ENCODE measurements at regions of chr14 and their contacts with region 1.

Region 1: GRCh38 chr14:90697577-90698206 is 118.5 kb downstream of the TTC7B start:
- DNase-seq: peak; percentile 84 to 88
- ATAC-seq: peak; percentile 56 to 61
- H3K4me3 ChIP-seq: peak overlapping the region in 1 of 4 donors; percentile 0
- H3K27ac ChIP-seq: peak overlapping the region; percentile 87 to 93 (median 88)
- H3K4me1 ChIP-seq: peaks cover 69 to 71% of the 10 kb centered on the region in 2 donors
- H3K27me3 ChIP-seq: no peaks in the 10 kb centered on the region
- CTCF ChIP-seq: peak; percentile 96 to 98 (median 96)
- POLR2A ChIP-seq: no peak

Region 2: DNA sequence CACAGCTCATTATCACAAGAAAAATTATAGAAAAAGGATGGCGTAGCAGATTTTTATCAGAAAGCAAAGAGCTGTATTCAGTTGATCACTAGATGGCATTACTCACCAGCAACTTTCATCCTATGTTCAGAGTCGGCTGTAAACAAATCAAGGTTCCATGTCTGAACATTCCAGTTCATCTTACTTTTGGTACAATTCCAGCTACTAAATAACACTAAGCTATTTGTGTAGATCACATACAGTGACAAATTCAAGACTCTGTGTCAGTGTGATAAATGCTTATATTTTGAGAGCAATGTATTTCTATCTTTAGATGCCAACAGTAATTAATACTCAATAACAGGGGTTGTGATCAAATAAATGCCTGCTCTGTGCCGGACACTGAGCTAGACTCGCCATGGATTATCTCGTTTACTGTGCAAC is 396.0 kb before region 1 on chr14:
- in situ Hi-C with region 1: loop called in 1 of 4 experiments (anchors 25 kb)
- intact Hi-C with region 1: loop called (anchors 1 kb)
- DNase-seq: no peak
- ATAC-seq: peak; percentile 77 to 78
- H3K4me3 ChIP-seq: no peak overlapping the region
- H3K27ac ChIP-seq: peak overlapping the region; percentile 74 to 88 (median 82)
- H3K4me1 ChIP-seq: peaks cover 27 to 32% of the 10 kb centered on the region in 2 donors
- H3K27me3 ChIP-seq: no peaks in the 10 kb centered on the region
- CTCF ChIP-seq: peak in 4 of 5 experiments; percentile 36 to 66 (median 45)
- POLR2A ChIP-seq: no peak

Region 3: GRCh38 chr14:90518941-90519256 is 178.8 kb before region 1 on chr14:
- in situ Hi-C with region 1: no loop called
- intact Hi-C with region 1: loop called (anchors 5 kb)
- DNase-seq: no peak
- ATAC-seq: no peak
- H3K4me3 ChIP-seq: no peak overlapping the region
- H3K27ac ChIP-seq: peak overlapping the region in 1 of 4 donors; percentile 35
- H3K4me1 ChIP-seq: peaks cover 24 to 33% of the 10 kb centered on the region in 2 donors
- H3K27me3 ChIP-seq: no peaks in the 10 kb centered on the region
- CTCF ChIP-seq: peak in 3 of 5 experiments; percentile 35 to 45 (median 40)
- POLR2A ChIP-seq: no peak

Region 4: GRCh38 chr14:90587918-90588317 is 109.8 kb before region 1 on chr14:
- in situ Hi-C with region 1: no loop called
- intact Hi-C with region 1: loop called (anchors 2 kb)
- DNase-seq: peak; percentile 94 to 98
- ATAC-seq: peak; percentile 96 to 97
- H3K4me3 ChIP-seq: no peak overlapping the region
- H3K27ac ChIP-seq: peak overlapping the region; percentile 84 to 91 (median 87)
- H3K4me1 ChIP-seq: peaks cover 16 to 17% of the 10 kb centered on the region in 2 donors
- H3K27me3 ChIP-seq: no peaks in the 10 kb centered on the region
- CTCF ChIP-seq: no peak
- POLR2A ChIP-seq: no peak

Region 5: DNA sequence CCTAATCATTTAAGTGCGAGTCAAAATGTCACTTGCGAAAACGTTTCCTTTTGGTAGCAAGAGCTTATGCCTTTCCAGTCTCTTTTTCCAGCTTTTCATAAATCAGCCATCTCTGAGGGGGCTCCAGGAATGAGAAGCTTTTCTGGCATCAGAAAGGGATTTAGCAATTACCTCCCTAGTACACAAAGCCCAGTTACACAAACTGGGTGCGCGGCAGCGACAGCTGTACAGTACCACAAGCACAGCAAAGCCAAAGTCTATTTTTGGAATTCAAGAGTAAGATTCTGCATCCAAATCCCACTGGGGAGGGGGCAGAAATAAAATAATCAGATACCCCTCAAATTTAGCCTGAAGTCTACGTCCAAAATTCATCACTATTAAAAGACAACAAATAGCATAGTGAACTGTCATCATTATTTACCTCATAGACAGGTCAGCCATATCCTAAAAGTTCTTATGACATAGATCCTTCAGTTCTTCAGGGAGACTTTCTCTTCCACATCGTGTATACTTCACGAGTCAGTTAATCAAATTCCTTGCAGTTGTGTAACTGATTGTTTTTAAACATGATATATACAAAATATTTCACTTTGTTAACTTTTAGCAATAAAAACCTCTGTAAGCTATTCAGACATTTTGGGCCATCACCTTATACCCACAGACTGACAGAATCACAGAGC is 32.2 kb before region 1 on chr14:
- in situ Hi-C with region 1: no loop called
- intact Hi-C with region 1: loop called (anchors 1 kb)
- DNase-seq: peak; percentile 64 to 86
- ATAC-seq: peak; percentile 83 to 91
- H3K4me3 ChIP-seq: no peak overlapping the region
- H3K27ac ChIP-seq: peak overlapping the region; percentile 86 to 91 (median 89)
- H3K4me1 ChIP-seq: peaks cover 41 to 62% of the 10 kb centered on the region in 2 donors
- H3K27me3 ChIP-seq: no peaks in the 10 kb centered on the region
- CTCF ChIP-seq: no peak
- POLR2A ChIP-seq: no peak

Region 6: GRCh38 chr14:90900476-90901083 is 202.9 kb after region 1 on chr14:
- in situ Hi-C with region 1: no loop called
- intact Hi-C with region 1: no loop called
- DNase-seq: no peak
- ATAC-seq: no peak
- H3K4me3 ChIP-seq: no peak overlapping the region
- H3K27ac ChIP-seq: no peak overlapping the region
- H3K4me1 ChIP-seq: no peaks in the 10 kb centered on the region
- H3K27me3 ChIP-seq: no peaks in the 10 kb centered on the region
- CTCF ChIP-seq: no peak
- POLR2A ChIP-seq: no peak